Activated CD4-positive, alpha-beta T cell treated with anti-CD3 and anti-CD28 coated beads for 36 hours (primary cell): ENCODE measurements at regions of chr1 and their contacts with region 1.

Region 1: GRCh38 chr1:222736972-222737371 is at the start of gene FAM177B:
- DNase-seq: no peak
- ATAC-seq: no peak
- H3K4me3 Mint-ChIP-seq: no peak within 1 kb of the TSS
- H3K27ac Mint-ChIP-seq: no peak within 1 kb of the TSS
- H3K4me1 Mint-ChIP-seq: peaks cover 8% of the 10 kb centered on the region
- H3K27me3 Mint-ChIP-seq: no peaks in the 10 kb centered on the region
- total RNA-seq, gene FAM177B: not detected

Region 2: GRCh38 chr1:223081181-223081994 is 344.4 kb after region 1 on chr1:
- CTCF ChIA-PET with region 1: interaction called, 7 read pairs
- POLR2A ChIA-PET with region 1: no interaction called
- intact Hi-C with region 1: loop called (anchors 1 to 5 kb)
- DNase-seq: peak; percentile 89
- ATAC-seq: peak; percentile 99
- H3K4me3 Mint-ChIP-seq: peak overlapping the region; percentile 30
- H3K27ac Mint-ChIP-seq: no peak overlapping the region
- H3K4me1 Mint-ChIP-seq: no peaks in the 10 kb centered on the region
- H3K27me3 Mint-ChIP-seq: no peaks in the 10 kb centered on the region

Region 3: GRCh38 chr1:223486365-223486764 is 749.4 kb after region 1 on chr1:
- CTCF ChIA-PET with region 1: no interaction called
- POLR2A ChIA-PET with region 1: no interaction called
- intact Hi-C with region 1: no loop called
- DNase-seq: no peak
- ATAC-seq: no peak
- H3K4me3 Mint-ChIP-seq: no peak overlapping the region
- H3K27ac Mint-ChIP-seq: no peak overlapping the region
- H3K4me1 Mint-ChIP-seq: peaks cover 7% of the 10 kb centered on the region
- H3K27me3 Mint-ChIP-seq: no peaks in the 10 kb centered on the region